CD4-positive, alpha-beta memory T cell (primary cell): ENCODE measurements at regions of chr12 and their contacts with region 1.

Region 1: GRCh38 chr12:108950991-108951739 is 69.7 kb downstream of the SVOP start:
- DNase-seq: peak; percentile 68 to 76 (median 71)
- H3K4me3 ChIP-seq: no peak overlapping the region
- H3K4me3 Mint-ChIP-seq: peak overlapping the region in 2 of 8 donors; percentile 4 to 34
- H3K27ac ChIP-seq: no peak overlapping the region
- H3K27ac Mint-ChIP-seq: no peak overlapping the region
- H3K4me1 ChIP-seq: peaks cover 7% of the 10 kb centered on the region
- H3K4me1 Mint-ChIP-seq: peaks cover 0 to 5% (median 1%) of the 10 kb centered on the region in 4 donors
- H3K27me3 ChIP-seq: no peaks in the 10 kb centered on the region
- H3K27me3 Mint-ChIP-seq: peaks cover 10 to 13% of the 10 kb centered on the region in 2 donors

Region 2: DNA sequence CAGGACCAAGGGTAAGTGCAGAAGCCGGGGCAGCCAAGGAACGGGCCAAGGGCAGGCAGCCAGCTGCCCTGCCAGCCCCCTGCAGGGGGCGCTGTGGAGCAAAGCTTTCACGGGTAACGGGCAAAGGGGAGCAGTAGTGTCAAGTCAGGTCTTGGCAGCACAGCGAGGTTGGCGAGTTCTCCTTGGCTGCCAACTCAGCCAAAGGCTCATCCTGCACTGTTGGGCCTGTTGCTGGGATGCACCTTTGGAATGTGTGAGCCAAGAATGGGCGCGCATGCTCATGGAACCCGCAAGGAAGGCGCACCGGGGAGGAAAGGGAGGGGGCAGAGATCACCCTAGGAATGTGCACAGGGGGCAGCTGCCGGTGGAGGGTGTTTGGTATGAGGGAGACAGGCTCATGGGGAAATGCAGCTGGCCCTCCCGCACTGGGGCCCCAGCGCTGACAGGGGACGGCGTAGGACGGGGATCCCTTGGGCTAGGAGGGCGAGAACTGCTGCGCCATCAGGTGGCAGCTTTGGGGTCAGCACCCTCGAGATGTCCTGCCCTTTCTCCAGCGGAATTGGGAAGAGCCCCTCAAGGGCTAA is 1038.7 kb before region 1 on chr12:
- CTCF ChIA-PET with region 1: no interaction called
- POLR2A ChIA-PET with region 1: no interaction called
- intact Hi-C with region 1: loop called (anchors 10 kb)
- DNase-seq: peak in 4 of 5 donors; percentile 29 to 39 (median 35)
- H3K4me3 ChIP-seq: peak overlapping the region in 1 of 2 donors; percentile 38
- H3K4me3 Mint-ChIP-seq: peak overlapping the region; percentile 63 to 83 (median 74)
- H3K27ac ChIP-seq: no peak overlapping the region
- H3K27ac Mint-ChIP-seq: peak overlapping the region in 1 of 7 donors; percentile 1
- H3K4me1 ChIP-seq: peaks cover 4% of the 10 kb centered on the region
- H3K4me1 Mint-ChIP-seq: peaks cover 3 to 5% (median 4%) of the 10 kb centered on the region in 4 donors
- H3K27me3 ChIP-seq: peaks cover 5% of the 10 kb centered on the region
- H3K27me3 Mint-ChIP-seq: peaks cover 27 to 42% of the 10 kb centered on the region in 2 donors

Region 3: GRCh38 chr12:108611884-108612415 is 339.2 kb before region 1 on chr12:
- CTCF ChIA-PET with region 1: interaction called, 3 read pairs
- POLR2A ChIA-PET with region 1: no interaction called
- intact Hi-C with region 1: loop called (anchors 2 kb)
- DNase-seq: peak; percentile 45 to 65 (median 51)
- H3K4me3 ChIP-seq: no peak overlapping the region
- H3K4me3 Mint-ChIP-seq: no peak overlapping the region
- H3K27ac ChIP-seq: no peak overlapping the region
- H3K27ac Mint-ChIP-seq: peak overlapping the region in 3 of 7 donors; percentile 23 to 75 (median 53)
- H3K4me1 ChIP-seq: peaks cover 7% of the 10 kb centered on the region
- H3K4me1 Mint-ChIP-seq: peaks cover 16 to 29% (median 26%) of the 10 kb centered on the region in 4 donors
- H3K27me3 ChIP-seq: no peaks in the 10 kb centered on the region
- H3K27me3 Mint-ChIP-seq: no peaks in the 10 kb centered on the region

Region 4: GRCh38 chr12:108884116-108885012 is 66.8 kb before region 1 on chr12:
- CTCF ChIA-PET with region 1: interaction called, 6 read pairs
- POLR2A ChIA-PET with region 1: no interaction called
- intact Hi-C with region 1: loop called (anchors 2 kb)
- DNase-seq: peak; percentile 51 to 58 (median 54)
- H3K4me3 ChIP-seq: no peak overlapping the region
- H3K4me3 Mint-ChIP-seq: no peak overlapping the region
- H3K27ac ChIP-seq: no peak overlapping the region
- H3K27ac Mint-ChIP-seq: peak overlapping the region in 1 of 7 donors; percentile 60
- H3K4me1 ChIP-seq: no peaks in the 10 kb centered on the region
- H3K4me1 Mint-ChIP-seq: peaks cover 0 to 2% (median under 1%) of the 10 kb centered on the region in 4 donors
- H3K27me3 ChIP-seq: no peaks in the 10 kb centered on the region
- H3K27me3 Mint-ChIP-seq: no peaks in the 10 kb centered on the region

Region 5: GRCh38 chr12:108933949-108934348 is 17.2 kb before region 1 on chr12:
- CTCF ChIA-PET with region 1: interaction called, 21 read pairs
- POLR2A ChIA-PET with region 1: no interaction called
- intact Hi-C with region 1: no loop called
- DNase-seq: no peak
- H3K4me3 ChIP-seq: no peak overlapping the region
- H3K4me3 Mint-ChIP-seq: no peak overlapping the region
- H3K27ac ChIP-seq: no peak overlapping the region
- H3K27ac Mint-ChIP-seq: no peak overlapping the region
- H3K4me1 ChIP-seq: no peaks in the 10 kb centered on the region
- H3K4me1 Mint-ChIP-seq: peaks cover 0 to under 1% (median 0%) of the 10 kb centered on the region in 4 donors
- H3K27me3 ChIP-seq: no peaks in the 10 kb centered on the region
- H3K27me3 Mint-ChIP-seq: peaks cover 0 to 4% of the 10 kb centered on the region in 2 donors

Region 6: DNA sequence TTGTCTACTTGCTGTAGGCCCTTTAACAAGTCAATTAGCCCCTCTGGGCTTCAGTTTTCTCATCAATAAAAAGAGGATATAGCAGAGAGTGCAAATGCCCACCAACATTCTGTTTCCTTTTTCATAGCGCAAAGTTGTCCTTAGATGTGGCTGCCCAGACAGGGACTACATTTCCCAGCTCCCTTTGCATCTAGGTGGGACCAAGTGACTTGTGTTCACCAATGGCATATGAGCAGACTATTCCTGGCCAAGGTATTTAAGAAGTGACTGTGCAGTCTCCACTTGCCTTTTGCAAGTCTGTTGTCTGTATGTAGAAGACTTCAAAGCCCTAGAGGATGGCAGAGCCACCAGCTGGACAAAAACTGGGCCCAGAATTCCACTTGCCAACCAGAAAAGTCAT is 11.6 kb before region 1 on chr12:
- CTCF ChIA-PET with region 1: interaction called, 14 read pairs
- POLR2A ChIA-PET with region 1: no interaction called
- intact Hi-C with region 1: no loop called
- DNase-seq: peak in 4 of 5 donors; percentile 17 to 22 (median 20)
- H3K4me3 ChIP-seq: no peak overlapping the region
- H3K4me3 Mint-ChIP-seq: no peak overlapping the region
- H3K27ac ChIP-seq: no peak overlapping the region
- H3K27ac Mint-ChIP-seq: peak overlapping the region in 1 of 7 donors; percentile 29
- H3K4me1 ChIP-seq: no peaks in the 10 kb centered on the region
- H3K4me1 Mint-ChIP-seq: peaks cover 0 to 5% (median 0%) of the 10 kb centered on the region in 4 donors
- H3K27me3 ChIP-seq: no peaks in the 10 kb centered on the region
- H3K27me3 Mint-ChIP-seq: peaks cover 2 to 3% of the 10 kb centered on the region in 2 donors